ENCODE measurements at regions of chr7 and their contacts with region 1.

Region 1: GRCh38 chr7:105387621-105388372 is 924 bp downstream of the SRPK2 start:
- DNase-seq: peak; percentile 59
- ATAC-seq: peak; percentile 35
- H3K4me3 Mint-ChIP-seq: peak overlapping the region; percentile 93
- H3K27ac Mint-ChIP-seq: no peak overlapping the region
- H3K4me1 Mint-ChIP-seq: peaks cover 16% of the 10 kb centered on the region
- H3K27me3 Mint-ChIP-seq: peaks cover 6% of the 10 kb centered on the region; the same call in 1 of the 2 replicates
- CTCF ChIP-seq: no peak

Region 2: DNA sequence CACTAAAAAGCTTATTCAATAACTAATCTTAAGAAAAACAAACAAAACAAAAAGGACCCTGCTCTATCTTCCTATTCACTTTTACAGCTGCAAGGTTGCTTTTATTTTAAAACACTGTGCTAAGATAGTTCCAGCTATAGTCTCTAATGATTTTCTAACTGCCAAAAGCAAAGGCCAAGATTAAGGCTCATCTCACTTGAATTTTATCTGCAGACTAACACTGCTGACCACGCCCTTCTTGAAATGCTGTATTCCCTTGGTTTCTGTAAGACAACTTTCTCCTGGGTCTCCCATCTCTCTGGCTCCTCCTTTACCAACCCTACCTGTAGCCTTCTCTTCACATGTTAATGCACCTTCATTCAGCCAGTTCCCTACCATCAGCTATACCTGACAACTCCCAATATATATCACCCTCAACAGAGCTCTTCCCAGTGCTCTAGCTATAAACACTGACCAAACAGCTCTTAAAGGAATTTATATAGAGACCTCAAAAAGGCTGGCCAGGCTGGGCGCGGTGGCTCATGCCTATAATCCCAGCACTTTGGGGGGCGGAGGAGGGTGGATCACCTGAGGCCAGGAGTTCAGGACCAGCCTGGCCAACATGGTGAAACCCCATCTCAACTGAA is 10.8 kb before region 1 on chr7:
- CTCF ChIA-PET with region 1: interaction called, 12 read pairs
- POLR2A ChIA-PET with region 1: no interaction called
- DNase-seq: no peak
- ATAC-seq: peak; percentile 98
- H3K4me3 Mint-ChIP-seq: peak overlapping the region; percentile 16; the same call in 1 of the 2 replicates
- H3K27ac Mint-ChIP-seq: peak overlapping the region; percentile 1
- H3K4me1 Mint-ChIP-seq: peaks cover 28% of the 10 kb centered on the region
- H3K27me3 Mint-ChIP-seq: no peaks in the 10 kb centered on the region
- CTCF ChIP-seq: no peak

Region 3: GRCh38 chr7:105402221-105403095 is 14.7 kb after region 1 on chr7:
- CTCF ChIA-PET with region 1: interaction called, 11 read pairs
- POLR2A ChIA-PET with region 1: no interaction called
- DNase-seq: no peak
- ATAC-seq: no peak
- H3K4me3 Mint-ChIP-seq: no peak overlapping the region
- H3K27ac Mint-ChIP-seq: no peak overlapping the region
- H3K4me1 Mint-ChIP-seq: peaks cover 10% of the 10 kb centered on the region; the same call in 1 of the 2 replicates
- H3K27me3 Mint-ChIP-seq: no peaks in the 10 kb centered on the region
- CTCF ChIP-seq: no peak

Region 4: GRCh38 chr7:105473163-105473562 is 85.4 kb after region 1 on chr7:
- CTCF ChIA-PET with region 1: no interaction called
- POLR2A ChIA-PET with region 1: no interaction called
- DNase-seq: no peak
- ATAC-seq: no peak
- H3K4me3 Mint-ChIP-seq: no peak overlapping the region
- H3K27ac Mint-ChIP-seq: no peak overlapping the region
- H3K4me1 Mint-ChIP-seq: no peaks in the 10 kb centered on the region
- H3K27me3 Mint-ChIP-seq: no peaks in the 10 kb centered on the region
- CTCF ChIP-seq: no peak

Measured in WTC11 (cell line).